A673 (cell line): ENCODE measurements at regions of chr11 and their contacts with region 1.

Region 1: GRCh38 chr11:95835768-95836488 is 45.6 kb downstream of the CEP57 start:
- DNase-seq: peak; percentile 93
- H3K4me3 ChIP-seq: no peak overlapping the region
- H3K27ac ChIP-seq: peak overlapping the region; percentile 39
- H3K4me1 ChIP-seq: peaks cover 16% of the 10 kb centered on the region
- H3K27me3 ChIP-seq: no peaks in the 10 kb centered on the region
- CTCF ChIP-seq: peak; percentile 99

Region 2: GRCh38 chr11:95611827-95612226 is 224.1 kb before region 1 on chr11:
- CTCF ChIA-PET with region 1: no interaction called
- POLR2A ChIA-PET with region 1: no interaction called
- intact Hi-C with region 1: no loop called
- DNase-seq: no peak
- H3K4me3 ChIP-seq: no peak overlapping the region
- H3K27ac ChIP-seq: no peak overlapping the region
- H3K4me1 ChIP-seq: no peaks in the 10 kb centered on the region
- H3K27me3 ChIP-seq: no peaks in the 10 kb centered on the region
- CTCF ChIP-seq: no peak

Region 3: DNA sequence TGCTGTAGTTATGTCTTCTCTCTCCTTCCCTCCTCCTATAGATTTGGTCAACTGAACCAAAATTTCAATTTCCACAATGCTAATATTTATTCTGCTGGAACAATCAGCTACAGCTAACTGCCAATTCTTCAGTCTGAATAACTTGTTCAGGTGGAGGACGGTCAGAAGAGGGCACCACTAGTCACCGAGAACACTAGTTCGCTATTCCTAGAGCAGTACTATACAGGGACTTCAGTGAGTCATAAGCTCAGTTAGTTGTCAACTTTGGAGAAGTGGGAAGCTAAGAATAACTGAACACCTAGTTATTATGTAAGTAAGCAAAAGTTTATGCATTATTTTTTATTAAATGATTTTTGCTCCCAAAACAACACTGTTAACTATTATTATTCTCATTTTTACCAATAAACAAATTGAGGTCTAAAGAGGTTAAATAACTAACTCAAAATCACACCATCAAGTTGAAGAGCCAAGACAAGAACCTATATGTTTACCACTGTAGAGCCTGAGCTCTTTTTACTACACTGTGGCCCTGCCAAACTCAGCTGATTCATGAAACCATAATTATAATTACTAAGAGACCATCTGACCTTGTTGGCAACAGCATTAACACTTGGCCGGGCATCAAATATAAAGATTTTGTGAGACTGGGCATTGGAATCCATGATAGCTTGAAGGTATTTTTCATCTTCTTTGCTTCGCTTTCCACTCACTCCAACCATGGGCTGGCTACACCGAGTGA is 13.3 kb after region 1 on chr11:
- CTCF ChIA-PET with region 1: interaction called, 16 read pairs
- POLR2A ChIA-PET with region 1: no interaction called
- intact Hi-C with region 1: no loop called
- DNase-seq: peak; percentile 77
- H3K4me3 ChIP-seq: no peak overlapping the region
- H3K27ac ChIP-seq: no peak overlapping the region
- H3K4me1 ChIP-seq: no peaks in the 10 kb centered on the region
- H3K27me3 ChIP-seq: no peaks in the 10 kb centered on the region
- CTCF ChIP-seq: peak; percentile 66

Region 4: GRCh38 chr11:96424693-96425092 is 588.8 kb after region 1 on chr11:
- CTCF ChIA-PET with region 1: interaction called, 11 read pairs
- POLR2A ChIA-PET with region 1: no interaction called
- intact Hi-C with region 1: loop called (anchors 1 kb)
- DNase-seq: peak; percentile 46
- H3K4me3 ChIP-seq: no peak overlapping the region
- H3K27ac ChIP-seq: no peak overlapping the region
- H3K4me1 ChIP-seq: no peaks in the 10 kb centered on the region
- H3K27me3 ChIP-seq: no peaks in the 10 kb centered on the region
- CTCF ChIP-seq: no peak